ENCODE measurements at regions of chr10 and their contacts with region 1.

Region 1: GRCh38 chr10:80927419-80928078 is 389.8 kb downstream of the SH2D4B start:
- DNase-seq: no peak
- H3K4me3 ChIP-seq: no peak overlapping the region
- H3K27ac ChIP-seq: no peak overlapping the region
- H3K4me1 ChIP-seq: no peaks in the 10 kb centered on the region
- H3K27me3 ChIP-seq: no peaks in the 10 kb centered on the region
- CTCF ChIP-seq: no peak

Region 2: GRCh38 chr10:80444646-80445319 is 482.8 kb before region 1 on chr10:
- intact Hi-C with region 1: loop called (anchors 5 kb)
- DNase-seq: peak in 4 of 5 donors; percentile 73 to 84 (median 78)
- H3K4me3 ChIP-seq: no peak overlapping the region
- H3K27ac ChIP-seq: no peak overlapping the region
- H3K4me1 ChIP-seq: peaks cover 0 to 13% (median 5%) of the 10 kb centered on the region in 3 donors
- H3K27me3 ChIP-seq: no peaks in the 10 kb centered on the region
- CTCF ChIP-seq: peak; percentile 85

Region 3: DNA sequence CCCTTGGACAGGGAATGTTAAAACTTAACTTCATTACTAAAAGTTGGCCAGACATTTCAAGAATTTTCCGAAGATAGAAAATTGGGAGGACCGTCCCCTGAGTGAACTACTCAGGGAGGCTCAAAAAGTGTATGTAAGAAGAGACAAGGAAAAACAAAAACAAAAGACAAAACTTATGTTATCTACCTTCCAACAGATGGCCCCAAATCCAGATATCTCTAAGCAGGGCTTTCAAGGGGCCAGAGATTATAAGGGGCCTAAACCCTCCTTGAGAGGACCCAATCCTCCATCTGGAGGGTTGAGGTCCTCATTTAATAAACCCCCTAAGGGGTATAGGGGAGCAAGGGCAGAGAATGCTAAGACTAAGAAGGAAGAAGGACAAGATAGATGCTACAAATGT is 186.3 kb before region 1 on chr10:
- intact Hi-C with region 1: no loop called
- DNase-seq: no peak
- H3K4me3 ChIP-seq: no peak overlapping the region
- H3K27ac ChIP-seq: no peak overlapping the region
- H3K4me1 ChIP-seq: no peaks in the 10 kb centered on the region
- H3K27me3 ChIP-seq: no peaks in the 10 kb centered on the region
- CTCF ChIP-seq: no peak